HCT116 (cell line): ENCODE measurements at regions of chr6 and their contacts with region 1.

Region 1: GRCh38 chr6:26183581-26184366 is 96.5 kb downstream of the HFE start:
- DNase-seq: no peak
- ATAC-seq: no peak
- H3K4me3 ChIP-seq: no peak overlapping the region
- H3K27ac ChIP-seq: no peak overlapping the region
- H3K4me1 ChIP-seq: peaks cover 3 to 14% of the 10 kb centered on the region in 2 experiments; a peak in 3 of 4 replicates
- H3K27me3 ChIP-seq: no peaks in the 10 kb centered on the region
- CTCF ChIP-seq: no peak
- POLR2A ChIP-seq: no peak
- RAD21 ChIP-seq: no peak

Region 2: GRCh38 chr6:26204332-26205165 is 20.8 kb after region 1 on chr6:
- CTCF ChIA-PET with region 1: no interaction called
- POLR2A ChIA-PET with region 1: interaction called, 118 read pairs
- RAD21 ChIA-PET with region 1: no interaction called
- intact Hi-C with region 1: no loop called
- DNase-seq: peak; percentile 98
- ATAC-seq: peak; percentile 72
- H3K4me3 ChIP-seq: peak overlapping the region; percentile 63 to 71
- H3K27ac ChIP-seq: peak overlapping the region; percentile 98
- H3K4me1 ChIP-seq: peaks cover 26 to 40% of the 10 kb centered on the region in 2 experiments
- H3K27me3 ChIP-seq: no peaks in the 10 kb centered on the region
- CTCF ChIP-seq: peak in 1 of 3 experiments; percentile 20; a peak in 2 of 6 replicates
- POLR2A ChIP-seq: peak; percentile 99
- RAD21 ChIP-seq: peak; percentile 2; the same call in 1 of the 2 replicates

Region 3: DNA sequence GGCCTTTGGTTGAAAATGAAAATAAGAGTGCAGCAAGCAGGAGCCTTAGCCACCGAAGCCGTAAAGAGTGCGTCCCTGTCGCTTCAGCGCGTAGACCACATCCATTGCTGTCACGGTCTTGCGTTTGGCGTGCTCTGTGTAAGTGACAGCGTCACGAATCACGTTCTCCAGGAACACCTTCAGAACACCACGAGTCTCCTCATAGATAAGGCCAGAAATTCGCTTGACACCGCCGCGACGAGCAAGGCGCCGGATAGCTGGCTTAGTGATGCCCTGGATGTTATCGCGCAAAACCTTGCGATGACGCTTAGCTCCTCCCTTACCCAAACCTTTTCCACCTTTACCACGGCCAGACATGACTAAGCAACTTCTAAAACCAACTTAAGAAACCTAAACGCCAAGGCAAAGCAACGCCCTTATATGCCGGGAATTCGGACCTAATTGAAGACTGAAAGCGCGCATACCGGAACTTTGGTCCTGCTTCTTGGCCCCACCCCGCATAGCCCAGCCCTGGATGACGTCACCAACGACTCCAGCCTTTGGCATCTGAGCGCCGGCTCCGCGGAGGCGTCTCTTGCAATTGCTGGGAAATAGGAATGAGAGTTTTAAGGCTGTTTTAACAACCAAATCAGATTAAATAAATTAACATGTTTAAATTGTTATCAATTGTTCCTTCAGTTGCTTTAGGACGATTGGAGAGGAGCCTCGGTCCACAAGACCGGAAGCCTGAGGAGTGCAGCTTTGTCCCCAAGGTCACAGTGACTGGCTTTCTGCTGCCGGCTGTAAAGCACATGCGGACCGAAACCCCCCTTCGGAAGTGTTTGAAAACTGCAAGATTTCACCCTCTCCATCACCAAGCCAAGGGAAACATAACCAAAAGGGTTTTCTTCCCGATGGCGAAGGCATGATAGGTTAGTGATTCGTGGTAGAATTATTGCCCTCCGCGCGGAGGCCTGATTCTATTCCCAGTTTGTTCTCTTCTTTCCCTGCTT is 101.7 kb after region 1 on chr6:
- CTCF ChIA-PET with region 1: no interaction called
- POLR2A ChIA-PET with region 1: no interaction called
- RAD21 ChIA-PET with region 1: interaction called in 1 of 2 experiments, 10 read pairs
- intact Hi-C with region 1: no loop called
- DNase-seq: peak; percentile 92
- ATAC-seq: peak; percentile 84
- H3K4me3 ChIP-seq: peak overlapping the region; percentile 44 to 56
- H3K27ac ChIP-seq: peak overlapping the region; percentile 77
- H3K4me1 ChIP-seq: peaks cover 2 to 17% of the 10 kb centered on the region in 2 experiments; a peak in 3 of 4 replicates
- H3K27me3 ChIP-seq: no peaks in the 10 kb centered on the region
- CTCF ChIP-seq: no peak
- POLR2A ChIP-seq: peak; percentile 98
- RAD21 ChIP-seq: no peak

Region 4: GRCh38 chr6:27132532-27133280 is 948.9 kb after region 1 on chr6:
- CTCF ChIA-PET with region 1: no interaction called
- POLR2A ChIA-PET with region 1: interaction called, 20 read pairs
- RAD21 ChIA-PET with region 1: no interaction called
- intact Hi-C with region 1: no loop called
- DNase-seq: peak; percentile 100
- ATAC-seq: peak; percentile 75
- H3K4me3 ChIP-seq: peak overlapping the region; percentile 62 to 71
- H3K27ac ChIP-seq: peak overlapping the region; percentile 99
- H3K4me1 ChIP-seq: peaks cover 21 to 38% of the 10 kb centered on the region in 2 experiments
- H3K27me3 ChIP-seq: no peaks in the 10 kb centered on the region
- CTCF ChIP-seq: no peak
- POLR2A ChIP-seq: peak; percentile 98
- RAD21 ChIP-seq: no peak